ENCODE measurements at regions of chr13 and their contacts with region 1.

Region 1: DNA sequence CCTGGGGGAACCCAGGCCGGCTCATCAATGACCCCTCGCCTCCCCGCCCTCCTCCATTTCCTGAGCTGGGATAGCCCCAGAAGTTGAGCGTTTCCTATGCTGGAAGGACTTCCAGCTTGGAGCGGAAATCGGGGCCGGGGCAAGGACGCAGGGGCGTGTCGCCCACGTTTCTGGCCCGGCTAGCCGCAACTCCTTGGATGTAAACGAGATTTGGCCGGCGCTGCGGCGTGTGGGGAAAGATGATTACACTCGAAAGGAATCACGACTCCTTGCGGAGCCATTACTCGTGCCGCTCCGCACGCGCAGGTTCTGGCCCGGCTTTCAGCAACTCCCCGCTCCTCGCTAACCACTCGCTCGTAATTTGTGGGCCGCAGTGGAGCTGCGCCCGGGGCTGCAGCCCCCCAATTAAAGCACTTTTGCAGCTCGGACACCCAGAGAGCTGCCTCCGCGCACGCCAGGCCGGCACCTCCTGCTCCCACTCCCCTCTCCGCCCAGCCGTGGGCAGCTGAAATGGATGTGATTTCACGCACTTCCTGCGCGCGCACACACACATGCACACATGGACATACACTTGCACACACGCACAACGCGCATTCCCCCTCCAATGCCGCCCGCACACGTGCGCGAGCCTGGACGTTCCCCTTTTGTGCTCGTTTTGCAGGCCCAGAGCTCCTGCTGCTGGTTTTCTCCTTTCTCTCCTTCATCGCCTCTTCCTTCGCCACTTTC is 15.7 kb downstream of the ZIC5 start:
- DNase-seq: no peak
- ATAC-seq: no peak
- H3K4me3 Mint-ChIP-seq: peak overlapping the region; percentile 24
- H3K27ac Mint-ChIP-seq: no peak overlapping the region
- H3K4me1 Mint-ChIP-seq: peaks cover 16% of the 10 kb centered on the region
- H3K27me3 Mint-ChIP-seq: peaks cover 73% of the 10 kb centered on the region
- CTCF ChIP-seq: no peak

Region 2: DNA sequence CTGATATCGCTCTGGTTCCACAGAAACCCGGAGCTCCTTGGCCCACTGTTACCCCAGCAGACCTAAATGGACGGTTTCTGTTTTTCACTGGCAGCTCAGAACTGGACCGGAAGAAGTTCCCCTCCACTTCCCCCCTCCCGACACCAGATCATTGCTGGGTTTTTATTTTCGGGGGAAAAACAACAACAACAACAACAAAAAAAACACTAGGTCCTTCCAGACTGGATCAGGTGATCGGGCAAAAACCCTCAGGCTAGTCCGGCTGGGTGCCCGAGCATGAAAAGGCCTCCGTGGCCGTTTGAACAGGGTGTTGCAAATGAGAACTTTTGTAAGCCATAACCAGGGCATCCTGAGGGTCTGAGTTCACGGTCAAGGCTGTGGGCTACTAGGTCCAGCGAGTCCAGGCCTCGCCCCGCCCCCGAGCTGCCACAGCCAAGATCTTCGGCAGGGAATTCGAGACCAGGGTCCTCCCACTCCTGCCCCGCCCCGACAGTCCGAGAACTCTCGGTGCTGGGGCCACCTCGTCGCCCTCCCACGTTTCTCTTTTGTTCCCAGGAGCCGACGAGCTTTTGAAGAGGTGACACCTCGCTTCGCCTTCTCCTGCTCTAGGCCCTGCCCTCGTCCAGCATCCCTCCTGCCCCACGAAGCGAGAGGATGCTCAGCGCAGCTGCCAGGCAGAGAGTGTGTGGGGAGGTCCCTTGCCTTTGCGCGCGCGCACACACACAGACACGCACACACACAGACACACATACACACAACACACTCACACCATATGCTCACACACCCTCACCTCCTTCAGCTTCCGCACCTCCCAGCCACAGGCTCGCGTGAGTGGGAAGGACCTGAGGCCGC is 34.4 kb after region 1 on chr13:
- CTCF ChIA-PET with region 1: no interaction called
- POLR2A ChIA-PET with region 1: interaction called, 4 read pairs
- intact Hi-C with region 1: loop called (anchors 5 kb)
- DNase-seq: no peak
- ATAC-seq: peak; percentile 49
- H3K4me3 Mint-ChIP-seq: no peak overlapping the region
- H3K27ac Mint-ChIP-seq: no peak overlapping the region
- H3K4me1 Mint-ChIP-seq: peaks cover 21% of the 10 kb centered on the region
- H3K27me3 Mint-ChIP-seq: peaks cover 91% of the 10 kb centered on the region
- CTCF ChIP-seq: no peak

Measured in activated CD8-positive, alpha-beta T cell treated with anti-CD3 and anti-CD28 coated beads for 36 hours (primary cell).